HepG2 (cell line): ENCODE measurements at regions of chr2 and their contacts with region 1.

Region 1: GRCh38 chr2:88212251-88212790 is 42.2 kb downstream of the THNSL2 start:
- DNase-seq: peak; percentile 90
- ATAC-seq: peak; percentile 80
- H3K4me3 ChIP-seq: peak overlapping the region in 1 of 3 experiments; percentile 47; a peak in 2 of 6 replicates
- H3K27ac ChIP-seq: peak overlapping the region; percentile 88
- H3K4me1 ChIP-seq: peaks cover 63% of the 10 kb centered on the region
- H3K27me3 ChIP-seq: no peaks in the 10 kb centered on the region
- CTCF ChIP-seq: peak; percentile 69
- EP300 ChIP-seq: peak in 1 of 2 experiments; percentile 92; a peak in 2 of 4 replicates
- POLR2A ChIP-seq: no peak
- RAD21 ChIP-seq: peak; percentile 79

Region 2: GRCh38 chr2:88114889-88115288 is 97.4 kb before region 1 on chr2:
- CTCF ChIA-PET with region 1: no interaction called
- POLR2A ChIA-PET with region 1: no interaction called
- in situ Hi-C with region 1: no loop called
- intact Hi-C with region 1: no loop called
- DNase-seq: no peak
- ATAC-seq: peak; percentile 17; the same call in 2 of the 3 replicates
- H3K4me3 ChIP-seq: no peak overlapping the region
- H3K27ac ChIP-seq: no peak overlapping the region
- H3K4me1 ChIP-seq: peaks cover 29% of the 10 kb centered on the region
- H3K27me3 ChIP-seq: peaks cover 0 to 8% of the 10 kb centered on the region in 2 experiments; a peak in 2 of 5 replicates
- CTCF ChIP-seq: no peak
- EP300 ChIP-seq: no peak
- POLR2A ChIP-seq: no peak
- RAD21 ChIP-seq: no peak

Region 3: GRCh38 chr2:88131201-88131998 is 80.9 kb before region 1 on chr2:
- CTCF ChIA-PET with region 1: no interaction called
- POLR2A ChIA-PET with region 1: interaction called, 12 read pairs
- in situ Hi-C with region 1: no loop called
- intact Hi-C with region 1: loop called (anchors 5 kb)
- DNase-seq: peak; percentile 75
- ATAC-seq: peak; percentile 22
- H3K4me3 ChIP-seq: peak overlapping the region in 1 of 3 experiments; percentile 18; a peak in 1 of 6 replicates
- H3K27ac ChIP-seq: peak overlapping the region; percentile 75
- H3K4me1 ChIP-seq: peaks cover 89% of the 10 kb centered on the region
- H3K27me3 ChIP-seq: no peaks in the 10 kb centered on the region; a peak in 1 of 5 replicates
- CTCF ChIP-seq: no peak
- EP300 ChIP-seq: peak in 1 of 2 experiments; percentile 95; a peak in 2 of 4 replicates
- POLR2A ChIP-seq: no peak
- RAD21 ChIP-seq: no peak

Region 4: GRCh38 chr2:88136817-88137216 is 75.5 kb before region 1 on chr2:
- CTCF ChIA-PET with region 1: no interaction called
- POLR2A ChIA-PET with region 1: interaction called, 12 read pairs
- in situ Hi-C with region 1: no loop called
- intact Hi-C with region 1: loop called (anchors 5 kb)
- DNase-seq: peak; percentile 83
- ATAC-seq: peak; percentile 32
- H3K4me3 ChIP-seq: no peak overlapping the region
- H3K27ac ChIP-seq: peak overlapping the region; percentile 89
- H3K4me1 ChIP-seq: peaks cover 92% of the 10 kb centered on the region
- H3K27me3 ChIP-seq: no peaks in the 10 kb centered on the region
- CTCF ChIP-seq: no peak
- EP300 ChIP-seq: peak in 1 of 2 experiments; percentile 76; a peak in 2 of 4 replicates
- POLR2A ChIP-seq: no peak
- RAD21 ChIP-seq: no peak

Region 5: DNA sequence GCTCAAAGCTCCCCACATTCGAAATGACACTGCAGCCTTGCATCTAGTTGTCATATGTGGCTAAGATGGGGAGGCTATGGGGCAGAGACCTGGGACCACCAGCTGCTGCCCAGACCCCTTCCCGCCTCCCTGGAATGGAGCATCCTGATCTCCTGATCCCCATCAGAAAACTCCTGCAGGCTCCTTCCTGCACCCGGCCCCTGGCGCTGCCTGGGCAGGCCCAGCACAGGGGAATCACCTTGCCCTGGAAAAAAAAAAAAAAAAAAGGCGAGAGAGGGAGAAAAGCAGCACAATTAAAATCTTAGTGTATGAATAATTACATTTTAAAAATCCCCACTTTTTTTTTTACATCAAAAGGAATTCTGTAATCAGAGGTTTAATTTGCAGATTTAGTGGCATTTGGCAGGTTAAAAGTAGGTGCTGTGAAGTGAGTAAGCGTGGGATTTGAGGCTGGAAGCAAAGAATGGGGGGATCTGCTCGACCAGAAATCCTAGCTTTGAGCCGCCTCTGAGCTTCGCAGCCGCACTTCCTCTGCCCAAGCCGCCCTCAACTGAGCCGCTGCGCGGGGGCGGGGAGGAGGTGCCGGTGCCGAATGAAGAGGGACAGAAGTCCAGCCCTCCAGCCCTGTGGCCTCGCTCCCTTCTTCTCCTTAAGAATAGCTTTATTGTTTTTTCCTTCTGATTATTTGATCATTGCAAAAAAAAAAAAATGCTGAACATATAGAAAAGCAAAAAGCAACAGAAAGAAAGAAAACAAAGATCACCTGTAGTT is 12.2 kb before region 1 on chr2:
- CTCF ChIA-PET with region 1: no interaction called
- POLR2A ChIA-PET with region 1: interaction called, 66 read pairs
- in situ Hi-C with region 1: no loop called
- intact Hi-C with region 1: loop called (anchors 1 kb)
- DNase-seq: peak; percentile 33
- ATAC-seq: peak; percentile 96
- H3K4me3 ChIP-seq: peak overlapping the region in 2 of 3 experiments; percentile 31 to 50; a peak in 3 of 6 replicates
- H3K27ac ChIP-seq: peak overlapping the region; percentile 22
- H3K4me1 ChIP-seq: peaks cover 53% of the 10 kb centered on the region
- H3K27me3 ChIP-seq: no peaks in the 10 kb centered on the region
- CTCF ChIP-seq: peak; percentile 31; the same call in 1 of the 2 replicates
- EP300 ChIP-seq: 0 out of 4 replicates have a peak, but pooled peaks of 1 of the 2 experiments have one; percentile 10
- POLR2A ChIP-seq: no peak
- RAD21 ChIP-seq: no peak

Region 6: GRCh38 chr2:88265349-88266303 is 53.3 kb after region 1 on chr2:
- CTCF ChIA-PET with region 1: interaction called, 3 read pairs
- POLR2A ChIA-PET with region 1: interaction called, 26 read pairs
- in situ Hi-C with region 1: no loop called
- intact Hi-C with region 1: loop called (anchors 2 kb)
- DNase-seq: peak; percentile 86
- ATAC-seq: peak; percentile 93
- H3K4me3 ChIP-seq: no peak overlapping the region
- H3K27ac ChIP-seq: no peak overlapping the region
- H3K4me1 ChIP-seq: peaks cover 29% of the 10 kb centered on the region
- H3K27me3 ChIP-seq: peaks cover 0 to 8% of the 10 kb centered on the region in 2 experiments; a peak in 2 of 5 replicates
- CTCF ChIP-seq: no peak
- EP300 ChIP-seq: peak in 1 of 2 experiments; percentile 53; a peak in 1 of 4 replicates
- POLR2A ChIP-seq: no peak
- RAD21 ChIP-seq: no peak

Region 7: DNA sequence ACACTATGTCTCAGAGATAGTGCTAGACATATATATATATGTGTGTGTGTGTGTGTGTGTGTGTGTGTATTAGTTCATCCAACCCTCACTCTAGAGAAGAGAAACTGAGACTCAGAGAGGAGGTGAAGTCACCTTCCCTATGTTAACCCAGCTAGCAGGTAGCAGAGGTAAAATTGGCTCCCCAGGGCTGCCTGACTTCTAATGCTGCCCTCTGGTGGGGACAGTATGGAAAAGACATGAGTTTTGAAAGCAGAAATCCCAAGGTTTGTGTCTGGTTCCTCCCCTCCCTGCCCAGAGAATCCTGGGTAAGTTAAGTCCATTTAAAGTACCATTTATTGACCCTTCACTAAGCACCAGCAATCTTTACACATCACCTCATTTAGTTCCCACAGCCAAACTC is 95.5 kb after region 1 on chr2:
- CTCF ChIA-PET with region 1: interaction called, 6 read pairs
- POLR2A ChIA-PET with region 1: interaction called, 3 read pairs
- in situ Hi-C with region 1: no loop called
- intact Hi-C with region 1: loop called (anchors 1 kb)
- DNase-seq: peak; percentile 65
- ATAC-seq: peak; percentile 71
- H3K4me3 ChIP-seq: no peak overlapping the region
- H3K27ac ChIP-seq: no peak overlapping the region
- H3K4me1 ChIP-seq: no peaks in the 10 kb centered on the region
- H3K27me3 ChIP-seq: no peaks in the 10 kb centered on the region; a peak in 1 of 5 replicates
- CTCF ChIP-seq: peak; percentile 80
- EP300 ChIP-seq: no peak
- POLR2A ChIP-seq: no peak
- RAD21 ChIP-seq: peak; percentile 79

Region 8: GRCh38 chr2:88471083-88471942 is 259.0 kb after region 1 on chr2:
- CTCF ChIA-PET with region 1: no interaction called
- POLR2A ChIA-PET with region 1: no interaction called
- in situ Hi-C with region 1: no loop called
- intact Hi-C with region 1: no loop called
- DNase-seq: no peak
- ATAC-seq: no peak
- H3K4me3 ChIP-seq: no peak overlapping the region
- H3K27ac ChIP-seq: no peak overlapping the region
- H3K4me1 ChIP-seq: no peaks in the 10 kb centered on the region
- H3K27me3 ChIP-seq: peaks cover 3 to 15% of the 10 kb centered on the region in 2 experiments; a peak in 2 of 5 replicates
- CTCF ChIP-seq: no peak
- EP300 ChIP-seq: no peak
- POLR2A ChIP-seq: no peak
- RAD21 ChIP-seq: no peak